Naive thymus-derived CD4-positive, alpha-beta T cell (primary cell): ENCODE measurements at regions of chr3 and their contacts with region 1.

Region 1: DNA sequence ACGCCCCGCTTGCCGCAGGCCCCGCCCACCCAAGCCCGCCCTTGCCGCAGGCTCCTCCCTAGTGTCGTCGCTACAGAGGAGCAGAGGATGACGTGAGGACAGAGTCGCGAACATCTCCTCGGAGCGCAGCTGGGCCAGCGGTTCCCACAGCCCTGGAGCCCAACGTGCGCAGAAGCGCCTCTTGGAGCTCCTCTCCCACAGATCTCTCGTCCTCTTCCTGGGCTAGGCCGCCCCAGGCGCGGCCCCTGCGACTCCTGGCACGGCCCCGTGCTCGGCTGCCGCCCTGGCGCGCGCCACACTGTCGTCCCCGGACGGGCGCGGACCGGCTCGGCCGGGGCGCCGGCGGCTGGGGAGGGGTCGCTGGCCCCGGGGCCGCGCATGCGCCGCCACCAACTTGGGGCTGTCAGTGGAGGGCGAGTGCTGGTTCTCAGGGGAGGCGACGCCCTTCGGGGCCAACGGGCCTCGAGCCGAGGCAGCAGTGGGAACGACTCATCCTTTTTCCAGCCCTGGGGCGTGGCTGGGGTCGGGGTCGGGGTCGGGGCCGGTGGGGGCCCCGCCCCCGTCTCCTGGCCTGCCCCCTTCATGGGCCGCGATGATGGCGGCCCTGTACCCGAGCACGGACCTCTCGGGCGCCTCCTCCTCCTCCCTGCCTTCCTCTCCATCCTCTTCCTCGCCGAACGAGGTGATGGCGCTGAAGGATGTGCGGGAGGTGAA is at the start of gene TRPC1:
- DNase-seq: peak in 8 of 9 donors; percentile 58 to 83 (median 78)
- ATAC-seq: peak; percentile 97
- H3K4me3 ChIP-seq: peak within 1 kb of the TSS; percentile 76
- H3K4me3 Mint-ChIP-seq: peak within 1 kb of the TSS; percentile 80 to 92 (median 88)
- H3K27ac ChIP-seq: peak within 1 kb of the TSS; percentile 76
- H3K27ac Mint-ChIP-seq: peak within 1 kb of the TSS; percentile 31 to 94 (median 88)
- H3K4me1 ChIP-seq: peaks cover 0 to 4% of the 10 kb centered on the region in 2 donors
- H3K4me1 Mint-ChIP-seq: peaks cover 5 to 20% (median 11%) of the 10 kb centered on the region in 7 donors
- H3K27me3 ChIP-seq: peaks cover 0 to 2% of the 10 kb centered on the region in 2 donors
- H3K27me3 Mint-ChIP-seq: peaks cover 20 to 67% (median 22%) of the 10 kb centered on the region in 5 donors
- total RNA-seq, gene TRPC1: 1.5 to 7.6 (median 5.3) TPM

Region 2: GRCh38 chr3:142148792-142149672 is 575.1 kb before region 1 on chr3 and contains the start of gene TFDP2:
- CTCF ChIA-PET with region 1: no interaction called
- POLR2A ChIA-PET with region 1: no interaction called
- intact Hi-C with region 1: loop called in 1 of 2 experiments (anchors 5 kb)
- DNase-seq: peak; percentile 77 to 88 (median 86)
- ATAC-seq: peak; percentile 99
- H3K4me3 ChIP-seq: peak within 1 kb of the TSS; percentile 81
- H3K4me3 Mint-ChIP-seq: peak within 1 kb of the TSS; percentile 85 to 96 (median 92)
- H3K27ac ChIP-seq: peak within 1 kb of the TSS; percentile 78
- H3K27ac Mint-ChIP-seq: peak within 1 kb of the TSS; percentile 57 to 95 (median 87)
- H3K4me1 ChIP-seq: peaks cover 0 to 13% of the 10 kb centered on the region in 2 donors
- H3K4me1 Mint-ChIP-seq: peaks cover 24 to 41% (median 32%) of the 10 kb centered on the region in 7 donors
- H3K27me3 ChIP-seq: no peaks in the 10 kb centered on the region
- H3K27me3 Mint-ChIP-seq: peaks cover 0 to 16% (median 0%) of the 10 kb centered on the region in 5 donors
- total RNA-seq, gene TFDP2: 23.7 to 44.7 (median 41.0) TPM

Region 3: GRCh38 chr3:142447852-142448823 is 276.0 kb before region 1 on chr3 and contains the start of gene XRN1:
- CTCF ChIA-PET with region 1: no interaction called
- POLR2A ChIA-PET with region 1: no interaction called
- intact Hi-C with region 1: loop called (anchors 1 to 2 kb)
- DNase-seq: peak; percentile 90 to 97 (median 94)
- ATAC-seq: peak; percentile 99
- H3K4me3 ChIP-seq: peak within 1 kb of the TSS; percentile 78
- H3K4me3 Mint-ChIP-seq: peak within 1 kb of the TSS; percentile 89 to 100 (median 98)
- H3K27ac ChIP-seq: peak within 1 kb of the TSS; percentile 99
- H3K27ac Mint-ChIP-seq: peak within 1 kb of the TSS; percentile 98 to 100 (median 99)
- H3K4me1 ChIP-seq: peaks cover 31% of the 10 kb centered on the region in 2 donors
- H3K4me1 Mint-ChIP-seq: peaks cover 26 to 55% (median 51%) of the 10 kb centered on the region in 7 donors
- H3K27me3 ChIP-seq: no peaks in the 10 kb centered on the region
- H3K27me3 Mint-ChIP-seq: no peaks in the 10 kb centered on the region
- total RNA-seq, gene XRN1: 86.1 to 123 (median 103) TPM

Region 4: GRCh38 chr3:142595951-142596725 is 128.0 kb before region 1 on chr3 and contains the start of gene PLS1:
- CTCF ChIA-PET with region 1: no interaction called
- POLR2A ChIA-PET with region 1: interaction called, 3 read pairs
- intact Hi-C with region 1: loop called (anchors 1 kb)
- DNase-seq: peak; percentile 74 to 97 (median 85)
- ATAC-seq: peak; percentile 91
- H3K4me3 ChIP-seq: peak within 1 kb of the TSS; percentile 82
- H3K4me3 Mint-ChIP-seq: peak within 1 kb of the TSS; percentile 96 to 100 (median 98)
- H3K27ac ChIP-seq: peak within 1 kb of the TSS; percentile 67
- H3K27ac Mint-ChIP-seq: peak within 1 kb of the TSS; percentile 83 to 95 (median 91)
- H3K4me1 ChIP-seq: peaks cover 0 to 3% of the 10 kb centered on the region in 2 donors
- H3K4me1 Mint-ChIP-seq: peaks cover 0 to 32% (median 20%) of the 10 kb centered on the region in 7 donors
- H3K27me3 ChIP-seq: no peaks in the 10 kb centered on the region
- H3K27me3 Mint-ChIP-seq: peaks cover 0 to 11% (median 0%) of the 10 kb centered on the region in 5 donors
- total RNA-seq, gene PLS1: 1.6 to 2.8 (median 2.0) TPM